ENCODE measurements at regions of chr1 and their contacts with region 1.

Region 1: GRCh38 chr1:53272349-53273315 is 34.3 kb upstream of the MAGOH start:
- DNase-seq: no peak
- H3K4me3 Mint-ChIP-seq: no peak overlapping the region
- H3K27ac Mint-ChIP-seq: no peak overlapping the region
- H3K4me1 Mint-ChIP-seq: no peaks in the 10 kb centered on the region
- H3K27me3 Mint-ChIP-seq: no peaks in the 10 kb centered on the region

Region 2: DNA sequence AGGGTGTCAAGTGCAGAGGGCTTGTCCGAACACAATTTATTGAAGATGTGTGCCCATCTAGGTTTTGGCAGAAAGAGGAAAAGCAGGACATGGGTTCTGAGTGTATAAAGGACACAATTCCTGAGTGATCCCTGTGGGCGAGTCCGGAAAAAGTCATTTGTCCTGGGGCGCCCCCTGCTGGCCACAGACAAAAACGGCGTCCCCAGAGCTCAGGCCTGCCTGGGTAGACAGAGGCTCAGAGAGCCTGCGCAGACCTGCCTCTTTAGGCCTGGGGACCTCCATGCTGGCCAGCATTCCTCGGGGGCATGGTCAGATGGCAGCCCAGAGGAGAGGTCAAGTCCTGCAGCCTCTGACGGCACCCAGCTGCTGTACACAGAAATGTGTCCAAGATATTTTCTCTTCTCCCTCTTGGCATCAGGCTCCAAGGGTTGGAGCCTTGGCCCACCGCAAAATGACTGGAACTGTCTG is 120.7 kb after region 1 on chr1:
- CTCF ChIA-PET with region 1: interaction called, 163 read pairs
- POLR2A ChIA-PET with region 1: interaction called, 3 read pairs
- intact Hi-C with region 1: no loop called
- DNase-seq: peak; percentile 80
- H3K4me3 Mint-ChIP-seq: no peak overlapping the region
- H3K27ac Mint-ChIP-seq: no peak overlapping the region
- H3K4me1 Mint-ChIP-seq: peaks cover 2% of the 10 kb centered on the region
- H3K27me3 Mint-ChIP-seq: no peaks in the 10 kb centered on the region

Measured in activated CD4-positive, alpha-beta memory T cell treated with anti-CD3 and anti-CD28 coated beads for 36 hours (primary cell).